HepG2 (cell line): ENCODE measurements at regions of chr19 and their contacts with region 1.

Region 1: DNA sequence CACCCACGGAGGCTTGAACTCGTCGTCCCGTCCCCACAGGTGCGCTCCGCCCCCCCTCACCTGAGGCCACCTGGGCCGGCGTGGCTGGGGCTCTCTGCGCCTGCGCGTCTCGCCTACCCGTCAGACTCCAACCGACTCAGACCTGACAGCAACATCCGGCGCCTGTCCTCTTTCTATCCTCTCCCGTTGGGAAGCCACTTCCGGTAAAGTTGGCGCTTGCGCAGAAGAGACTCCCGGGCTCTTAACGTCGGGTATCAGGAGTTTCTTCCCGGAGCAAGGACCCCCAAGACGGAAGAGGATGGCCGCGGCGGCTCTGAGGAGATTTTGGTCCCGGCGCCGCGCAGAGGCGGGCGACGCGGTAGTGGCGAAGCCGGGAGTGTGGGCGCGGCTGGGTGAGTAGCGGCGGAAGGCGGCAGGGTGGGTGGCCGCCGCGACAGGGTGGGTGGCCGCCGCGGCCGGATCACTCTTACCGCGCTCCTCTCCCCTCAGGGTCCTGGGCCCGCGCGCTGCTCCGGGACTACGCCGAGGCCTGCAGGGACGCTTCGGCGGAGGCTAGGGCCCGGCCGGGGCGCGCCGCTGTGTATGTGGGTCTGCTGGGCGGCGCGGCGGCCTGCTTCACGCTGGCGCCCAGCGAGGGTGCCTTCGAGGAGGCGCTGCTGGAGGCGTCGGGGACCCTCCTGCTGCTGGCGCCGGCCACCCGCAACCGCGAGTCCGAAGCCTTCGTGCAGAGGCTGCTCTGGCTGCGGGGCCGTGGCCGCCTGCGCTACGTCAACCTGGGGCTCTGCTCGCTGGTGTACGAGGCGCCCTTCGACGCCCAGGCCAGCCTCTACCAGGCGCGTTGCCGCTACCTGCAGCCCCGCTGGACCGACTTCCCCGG is at the starts of genes TIMM29 and YIPF2:
- DNase-seq: peak; percentile 99
- ATAC-seq: peak; percentile 87
- H3K4me3 ChIP-seq: peak within 1 kb of the TSS; percentile 90 to 99 (median 96)
- H3K27ac ChIP-seq: peak within 1 kb of the TSS; percentile 83
- H3K4me1 ChIP-seq: peaks cover 24% of the 10 kb centered on the region
- H3K27me3 ChIP-seq: no peaks in the 10 kb centered on the region; a peak in 1 of 5 replicates
- CTCF ChIP-seq: no peak
- EP300 ChIP-seq: peak in 1 of 2 experiments; percentile 41; a peak in 2 of 4 replicates
- POLR2A ChIP-seq: peak; percentile 58 to 69
- RAD21 ChIP-seq: no peak
- total RNA-seq, gene TIMM29: 25.6 and 33.8 TPM in 2 replicates
- total RNA-seq, gene YIPF2: 22.7 and 37.3 TPM in 2 replicates

Region 2: GRCh38 chr19:10870955-10871603 is 57.7 kb before region 1 on chr19 and contains the start of gene CARM1:
- CTCF ChIA-PET with region 1: no interaction called
- POLR2A ChIA-PET with region 1: interaction called, 3 read pairs
- in situ Hi-C with region 1: no loop called
- intact Hi-C with region 1: loop called (anchors 10 kb)
- DNase-seq: peak; percentile 92
- ATAC-seq: peak; percentile 81
- H3K4me3 ChIP-seq: peak within 1 kb of the TSS; percentile 85 to 96 (median 87)
- H3K27ac ChIP-seq: peak within 1 kb of the TSS; percentile 60
- H3K4me1 ChIP-seq: peaks cover 54% of the 10 kb centered on the region
- H3K27me3 ChIP-seq: no peaks in the 10 kb centered on the region
- CTCF ChIP-seq: peak; percentile 76
- EP300 ChIP-seq: no peak
- POLR2A ChIP-seq: no peak
- RAD21 ChIP-seq: no peak
- total RNA-seq, gene CARM1: 21.9 and 27.6 TPM in 2 replicates